Activated CD4-positive, alpha-beta memory T cell treated with anti-CD3 and anti-CD28 coated beads for 36 hours (primary cell): ENCODE measurements at regions of chr6 and their contacts with region 1.

Region 1: DNA sequence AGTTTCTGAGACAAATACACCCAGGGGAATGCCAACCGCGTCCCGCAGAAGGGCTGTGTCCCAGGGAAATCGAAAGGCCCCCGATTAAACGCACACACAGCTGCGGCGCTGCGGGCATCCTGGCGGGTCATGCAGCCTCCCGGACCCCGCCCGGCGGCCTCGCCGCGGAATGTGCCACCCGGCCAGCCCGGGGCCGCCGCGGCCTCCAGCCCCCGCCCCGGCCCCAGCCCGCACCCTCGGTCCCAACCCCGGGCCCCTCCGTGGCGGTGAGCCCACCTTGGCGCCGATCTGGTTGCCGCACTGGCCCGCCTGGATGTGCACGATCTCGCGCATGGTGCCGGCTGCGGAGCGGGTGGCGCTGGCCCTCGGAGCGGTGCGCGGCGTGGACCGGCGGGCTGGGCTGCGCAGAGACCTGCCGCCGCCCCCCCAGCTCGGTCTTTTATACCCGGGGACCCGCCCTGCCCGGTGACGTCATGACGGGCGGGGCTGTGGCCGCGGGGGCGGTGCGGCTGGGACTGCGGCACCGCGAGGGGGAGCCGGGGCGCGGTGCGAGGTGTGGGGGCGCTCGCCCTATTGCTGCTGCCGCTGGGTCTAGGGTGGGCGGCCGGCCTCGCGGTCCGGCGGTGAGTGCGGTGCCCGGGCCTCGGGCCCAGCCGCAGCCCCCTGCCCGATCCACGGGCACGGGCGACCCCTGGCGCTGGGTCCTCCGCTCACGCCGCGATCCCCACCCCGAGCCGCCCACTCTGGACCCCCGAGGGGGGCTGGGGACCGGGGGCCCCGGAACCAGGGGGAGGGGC is at the start of gene TUBB2A:
- DNase-seq: peak; percentile 84
- H3K4me3 Mint-ChIP-seq: peak within 1 kb of the TSS; percentile 80
- H3K27ac Mint-ChIP-seq: peak within 1 kb of the TSS; percentile 50
- H3K4me1 Mint-ChIP-seq: peaks cover 23% of the 10 kb centered on the region
- H3K27me3 Mint-ChIP-seq: peaks cover 7% of the 10 kb centered on the region
- total RNA-seq, gene TUBB2A: 4.2 to 4.6 TPM

Region 2: DNA sequence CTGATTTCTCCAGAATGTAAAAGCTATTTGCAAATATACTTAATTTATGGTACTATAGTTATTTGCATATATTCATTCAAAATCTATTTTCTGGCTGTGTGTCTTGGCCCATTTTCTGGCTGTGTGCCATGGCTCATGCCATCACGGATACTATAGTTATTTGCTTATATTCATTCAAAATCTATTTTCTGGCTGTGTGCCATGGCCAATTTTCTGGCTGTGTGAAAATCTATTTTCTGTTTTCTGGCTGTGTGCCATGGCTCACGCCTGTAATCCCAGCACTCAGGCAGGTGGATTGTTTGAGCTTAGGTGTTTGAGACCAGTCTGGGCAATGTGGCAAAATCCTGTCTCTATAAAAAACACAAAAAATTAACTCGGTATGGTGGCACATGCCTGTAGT is 117.9 kb before region 1 on chr6:
- CTCF ChIA-PET with region 1: no interaction called
- POLR2A ChIA-PET with region 1: no interaction called
- intact Hi-C with region 1: no loop called
- DNase-seq: no peak
- H3K4me3 Mint-ChIP-seq: no peak overlapping the region
- H3K27ac Mint-ChIP-seq: no peak overlapping the region
- H3K4me1 Mint-ChIP-seq: no peaks in the 10 kb centered on the region
- H3K27me3 Mint-ChIP-seq: no peaks in the 10 kb centered on the region

Region 3: DNA sequence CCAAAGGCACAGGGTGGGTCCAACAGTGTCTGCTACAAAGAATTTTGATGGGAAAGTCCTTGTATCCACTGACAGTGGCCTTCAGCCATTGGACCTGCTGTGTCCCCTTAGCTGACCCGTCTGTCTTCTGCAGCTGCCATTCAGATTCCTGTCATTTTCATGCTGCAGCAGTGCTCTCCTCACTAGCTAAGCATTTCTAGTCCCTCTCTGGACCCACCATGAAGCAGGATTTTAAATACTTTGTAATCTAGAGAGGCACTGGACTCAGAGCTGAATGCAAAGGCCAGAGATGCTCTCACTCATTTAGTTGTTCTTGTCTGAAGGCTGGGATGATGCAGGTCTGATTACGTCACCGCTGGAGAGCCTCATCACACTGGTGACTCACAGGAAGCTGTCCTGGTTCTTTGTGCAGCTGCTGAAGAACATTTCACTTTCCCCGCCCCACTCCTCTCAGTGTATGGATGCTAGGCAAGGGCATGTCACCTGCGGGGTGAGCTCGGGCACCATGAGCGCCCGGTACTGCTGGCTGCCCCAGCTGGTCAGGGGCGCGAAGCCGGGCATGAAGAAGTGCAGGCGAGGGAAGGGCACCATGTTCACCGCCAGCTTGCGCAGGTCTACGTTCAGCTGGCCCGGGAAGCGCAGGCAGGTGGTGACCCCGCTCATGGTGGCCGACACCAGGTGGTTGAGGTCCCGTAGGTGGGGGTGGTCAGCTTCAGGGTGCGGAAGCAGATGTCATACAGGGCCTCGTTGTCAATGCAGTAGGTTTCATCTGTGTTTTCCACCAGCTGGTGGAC is 19.4 kb after region 1 on chr6:
- CTCF ChIA-PET with region 1: no interaction called
- POLR2A ChIA-PET with region 1: interaction called, 3 read pairs
- intact Hi-C with region 1: loop called (anchors 1 kb)
- DNase-seq: peak; percentile 76
- H3K4me3 Mint-ChIP-seq: no peak overlapping the region
- H3K27ac Mint-ChIP-seq: no peak overlapping the region
- H3K4me1 Mint-ChIP-seq: peaks cover 2% of the 10 kb centered on the region
- H3K27me3 Mint-ChIP-seq: no peaks in the 10 kb centered on the region

Region 4: DNA sequence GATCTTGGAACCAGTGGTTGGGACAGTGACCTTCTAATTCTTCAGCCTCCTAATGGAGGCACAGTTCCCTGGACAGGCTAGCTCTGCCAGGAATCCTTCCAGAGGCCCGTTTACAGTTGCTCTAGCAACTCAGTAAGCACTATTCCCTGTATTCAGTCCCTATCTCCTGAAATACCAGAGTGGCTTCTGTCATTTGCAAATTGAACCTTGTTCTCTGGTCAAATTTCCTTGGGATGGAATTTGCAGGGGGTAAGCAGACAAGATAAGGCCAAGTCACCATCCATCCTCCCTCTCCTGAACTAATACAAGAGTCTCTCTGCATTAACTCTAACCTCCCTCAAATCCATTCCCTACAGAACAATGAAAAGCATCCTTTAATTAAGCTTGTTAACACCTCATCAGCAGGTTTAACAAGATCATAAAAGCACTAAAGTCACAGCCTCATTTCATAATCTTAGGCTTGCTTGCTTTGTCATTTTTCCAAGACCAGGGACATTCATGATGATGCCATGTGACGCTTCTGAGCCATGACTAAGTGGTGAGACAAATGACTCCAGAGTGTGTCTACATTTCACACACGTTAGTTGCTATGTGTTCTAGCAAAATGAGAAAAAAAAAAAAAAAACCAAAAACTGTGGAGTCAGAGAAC is 262.4 kb after region 1 on chr6:
- CTCF ChIA-PET with region 1: no interaction called
- POLR2A ChIA-PET with region 1: no interaction called
- intact Hi-C with region 1: no loop called
- DNase-seq: peak; percentile 30
- H3K4me3 Mint-ChIP-seq: no peak overlapping the region
- H3K27ac Mint-ChIP-seq: no peak overlapping the region
- H3K4me1 Mint-ChIP-seq: peaks cover 6% of the 10 kb centered on the region
- H3K27me3 Mint-ChIP-seq: no peaks in the 10 kb centered on the region

Region 5: DNA sequence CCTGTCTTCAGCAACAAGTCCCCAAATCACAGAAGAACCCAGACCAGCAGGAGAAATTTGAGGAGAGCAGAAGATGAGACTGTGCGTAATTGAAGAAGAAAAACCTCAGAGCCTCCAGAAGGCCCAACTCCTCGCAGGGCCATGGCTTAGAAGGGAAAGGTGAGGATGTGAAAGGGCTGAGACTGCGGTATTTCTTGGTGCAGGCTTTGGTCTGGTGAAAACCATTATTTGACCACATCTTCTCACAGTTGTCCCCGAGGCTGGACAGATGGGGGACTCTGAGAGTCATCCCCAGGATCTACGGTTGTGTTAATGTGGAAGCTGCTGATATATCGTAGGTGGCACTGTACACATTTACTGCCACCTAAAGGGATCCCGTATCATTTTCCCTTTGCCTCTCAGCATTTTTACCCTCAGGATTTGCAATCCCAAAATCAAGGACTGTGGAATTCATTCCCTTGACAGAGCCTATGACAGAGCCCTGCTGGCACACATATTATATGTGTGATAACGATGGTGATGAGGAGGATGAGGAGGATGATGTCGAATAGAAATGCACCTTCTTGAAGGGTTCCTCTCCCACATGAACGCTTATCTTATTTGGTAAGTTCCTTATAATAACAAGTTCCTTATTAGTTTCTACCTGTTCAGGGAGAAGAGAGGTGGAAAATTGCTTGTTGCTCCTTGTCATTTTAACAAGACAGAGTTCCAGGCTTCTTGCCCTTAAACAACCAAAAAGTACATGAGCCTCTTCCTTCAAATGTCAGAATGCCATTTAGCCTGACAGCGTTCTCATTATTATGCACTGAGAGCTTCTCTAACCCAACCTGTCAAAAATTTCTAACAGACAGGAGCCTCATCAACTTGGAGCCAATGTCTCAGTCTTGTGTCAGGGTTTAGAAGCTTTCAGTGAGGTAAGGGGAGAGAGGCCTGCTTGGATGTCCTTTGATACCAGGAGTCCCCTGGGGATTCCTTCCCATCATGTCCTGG is 458.4 kb after region 1 on chr6:
- CTCF ChIA-PET with region 1: no interaction called
- POLR2A ChIA-PET with region 1: no interaction called
- intact Hi-C with region 1: no loop called
- DNase-seq: no peak
- H3K4me3 Mint-ChIP-seq: no peak overlapping the region
- H3K27ac Mint-ChIP-seq: no peak overlapping the region
- H3K4me1 Mint-ChIP-seq: no peaks in the 10 kb centered on the region
- H3K27me3 Mint-ChIP-seq: peaks cover 13% of the 10 kb centered on the region